ENCODE measurements at regions of chrX and their contacts with region 1.

Region 1: DNA sequence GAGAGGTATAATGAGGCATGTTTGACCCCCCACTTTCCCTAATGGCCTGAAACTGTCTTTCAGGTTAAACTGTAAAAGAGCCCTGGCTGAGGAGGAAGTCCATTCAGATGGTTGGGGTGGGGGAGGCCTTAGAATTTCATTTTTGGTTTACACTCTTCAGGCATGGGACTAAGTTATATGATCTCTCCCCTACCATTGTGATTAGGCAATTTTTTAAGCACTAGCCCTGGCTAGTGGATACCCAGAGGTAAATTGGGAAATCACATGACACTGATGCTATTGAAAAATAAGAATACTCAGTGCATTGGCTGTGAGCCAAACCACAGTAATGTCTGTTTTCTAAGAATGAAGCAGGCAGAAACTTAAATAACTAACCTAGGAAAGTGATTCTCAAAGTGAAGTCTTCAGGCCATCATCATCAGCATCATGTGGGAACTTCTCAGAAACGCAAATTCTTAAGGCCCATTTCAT is 149.7 kb downstream of the RRAGB start:
- DNase-seq: peak; percentile 1
- H3K4me3 Mint-ChIP-seq: no peak overlapping the region
- H3K27ac Mint-ChIP-seq: no peak overlapping the region
- H3K4me1 Mint-ChIP-seq: no peaks in the 10 kb centered on the region
- H3K27me3 Mint-ChIP-seq: no peaks in the 10 kb centered on the region
- CTCF ChIP-seq: no peak

Region 2: GRCh38 chrX:55801805-55802204 is 65.4 kb before region 1 on chrX:
- CTCF ChIA-PET with region 1: no interaction called
- intact Hi-C with region 1: loop called (anchors 10 kb)
- DNase-seq: no peak
- H3K4me3 Mint-ChIP-seq: no peak overlapping the region
- H3K27ac Mint-ChIP-seq: no peak overlapping the region
- H3K4me1 Mint-ChIP-seq: no peaks in the 10 kb centered on the region
- H3K27me3 Mint-ChIP-seq: no peaks in the 10 kb centered on the region
- CTCF ChIP-seq: no peak

Measured in Calu3 (cell line).